GM10248 (cell line): ENCODE measurements at regions of chr12 and their contacts with region 1.

Region 1: DNA sequence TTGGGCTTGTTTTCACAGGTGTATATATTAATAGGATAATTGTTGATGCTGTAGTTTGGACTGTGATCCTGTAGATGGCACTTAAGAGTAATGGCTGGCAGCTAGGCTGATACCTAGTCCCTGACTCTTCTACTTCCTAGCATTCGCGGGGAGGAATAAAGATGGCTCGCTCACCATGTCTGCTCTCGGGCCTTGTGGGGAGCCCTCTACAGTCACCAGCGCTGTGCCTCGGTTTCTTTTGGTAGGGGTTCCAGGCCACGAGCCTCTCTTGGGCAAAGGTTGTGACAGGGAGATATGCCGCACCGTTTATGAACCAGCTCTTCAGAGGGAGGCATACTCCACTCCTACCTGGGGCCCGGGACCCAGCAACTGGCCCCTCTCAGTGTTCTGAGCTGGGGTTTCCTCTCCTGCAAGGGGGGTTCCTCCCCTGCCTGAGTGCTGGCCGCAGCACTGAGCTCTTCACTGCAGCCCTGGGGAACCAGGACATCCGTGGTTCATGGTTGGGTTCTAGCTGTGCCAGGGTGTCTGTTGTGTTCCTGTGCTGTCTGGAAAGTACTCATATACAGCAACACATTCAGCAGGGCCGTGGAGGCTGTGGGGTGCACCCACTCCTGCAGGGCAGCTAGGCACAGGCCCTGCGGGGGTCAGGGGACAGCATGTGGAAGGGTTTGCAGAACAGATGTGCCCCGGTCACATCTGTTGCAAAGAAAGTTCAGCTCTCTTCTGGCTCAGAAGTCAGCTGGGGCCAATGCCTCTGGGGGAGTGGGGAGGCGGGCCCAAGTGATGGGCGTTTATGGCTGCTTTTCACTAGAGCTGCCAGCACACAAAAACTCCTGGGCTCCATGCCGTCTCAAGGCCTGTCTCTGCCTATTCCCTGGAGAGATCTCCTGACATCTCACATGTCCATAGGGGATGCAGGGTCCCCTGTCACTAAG is 147.9 kb downstream of the PPFIA2 start:
- DNase-seq: no peak
- CTCF ChIP-seq: peak; percentile 17

Region 2: DNA sequence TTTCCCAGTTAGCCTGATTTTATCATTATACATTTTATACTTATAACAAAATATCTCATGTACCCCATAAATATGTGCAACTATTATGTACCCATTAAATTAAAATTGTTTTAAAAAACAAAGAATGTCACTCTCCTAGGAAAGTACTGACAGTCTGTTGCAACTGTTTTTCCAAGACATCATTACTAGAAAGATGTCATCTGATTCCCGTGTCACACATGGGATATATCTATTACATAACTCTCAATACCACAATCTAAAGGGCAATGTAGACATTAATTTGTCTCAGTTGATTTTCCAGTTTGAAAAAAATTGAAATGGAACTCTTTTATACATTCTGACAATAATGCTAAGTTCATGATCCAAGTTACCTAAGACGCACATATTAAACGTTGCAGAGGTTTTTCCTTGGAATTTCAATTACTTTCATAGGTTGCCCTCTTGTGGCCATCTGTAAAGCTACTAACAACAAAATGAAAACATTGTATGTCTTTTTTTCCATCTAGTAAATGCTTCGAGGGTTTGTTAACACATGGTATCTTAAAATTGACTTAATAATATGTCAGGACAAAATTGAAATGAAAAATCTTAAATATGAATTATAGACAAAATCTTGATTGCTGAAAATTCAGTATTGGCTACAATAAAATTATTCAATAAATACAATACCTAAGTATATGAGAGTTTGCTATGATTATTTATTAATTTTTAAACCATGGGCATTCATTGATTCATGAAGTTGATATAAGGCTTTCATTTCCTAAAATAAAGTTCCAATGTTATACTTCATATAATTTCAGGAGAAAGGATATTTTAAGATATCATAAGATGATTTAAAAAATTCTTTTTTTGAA is 16.3 kb after region 1 on chr12:
- CTCF ChIA-PET with region 1: interaction called, 10 read pairs
- POLR2A ChIA-PET with region 1: no interaction called
- DNase-seq: no peak
- CTCF ChIP-seq: peak; percentile 43

Region 3: GRCh38 chr12:81639196-81639595 is 28.0 kb after region 1 on chr12:
- CTCF ChIA-PET with region 1: no interaction called
- POLR2A ChIA-PET with region 1: no interaction called
- DNase-seq: no peak
- CTCF ChIP-seq: no peak

Region 4: DNA sequence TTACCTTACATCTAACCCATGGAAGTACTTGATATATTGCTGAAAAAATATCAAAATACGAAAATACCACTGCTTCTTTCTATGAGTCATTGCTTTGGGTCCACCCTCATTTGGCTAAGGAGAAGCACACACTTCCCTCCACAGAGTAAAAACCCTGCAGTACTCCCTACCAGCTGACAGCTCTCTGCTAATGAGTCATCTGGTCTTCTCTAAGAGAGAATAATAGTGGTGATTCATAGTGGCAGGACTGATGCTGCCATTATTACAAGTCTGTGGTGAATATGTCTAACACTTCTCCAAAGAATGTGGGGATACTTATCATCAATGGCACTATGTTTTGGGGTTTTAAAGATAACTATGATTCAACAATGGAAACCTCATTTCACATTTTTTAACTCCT is 57.3 kb after region 1 on chr12:
- CTCF ChIA-PET with region 1: no interaction called
- POLR2A ChIA-PET with region 1: no interaction called
- DNase-seq: no peak
- CTCF ChIP-seq: no peak

Region 5: DNA sequence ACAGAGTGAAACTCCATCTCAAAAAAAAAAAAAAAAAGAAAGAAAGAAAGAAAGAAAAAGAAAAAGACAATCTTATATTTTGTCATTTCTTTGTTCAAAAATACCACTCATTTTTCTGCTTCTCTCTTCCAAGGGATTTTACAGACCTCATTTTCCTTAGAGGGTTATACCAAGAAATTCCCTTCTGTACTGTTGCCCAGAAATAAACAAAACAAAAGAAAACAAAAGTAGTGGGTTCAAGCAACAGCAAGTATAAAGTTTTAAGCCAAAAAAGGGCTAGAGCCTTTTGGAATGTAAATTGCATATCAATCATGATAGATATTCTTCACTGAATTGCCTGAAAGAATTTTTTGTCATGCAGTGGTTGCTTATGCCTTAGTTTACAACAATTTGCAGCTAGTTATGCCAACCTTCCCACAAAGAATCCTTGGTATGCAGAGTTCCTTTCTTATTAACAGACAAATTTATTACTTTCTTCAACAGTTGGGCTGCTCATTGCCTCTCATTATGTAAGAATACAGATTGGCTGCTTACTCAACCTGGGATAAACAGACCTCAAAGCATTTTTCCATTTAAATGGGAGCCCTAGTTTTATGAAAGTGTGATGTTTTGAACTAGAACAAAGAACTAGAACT is 277.0 kb after region 1 on chr12:
- CTCF ChIA-PET with region 1: no interaction called
- POLR2A ChIA-PET with region 1: no interaction called
- DNase-seq: no peak
- CTCF ChIP-seq: no peak

Region 6: DNA sequence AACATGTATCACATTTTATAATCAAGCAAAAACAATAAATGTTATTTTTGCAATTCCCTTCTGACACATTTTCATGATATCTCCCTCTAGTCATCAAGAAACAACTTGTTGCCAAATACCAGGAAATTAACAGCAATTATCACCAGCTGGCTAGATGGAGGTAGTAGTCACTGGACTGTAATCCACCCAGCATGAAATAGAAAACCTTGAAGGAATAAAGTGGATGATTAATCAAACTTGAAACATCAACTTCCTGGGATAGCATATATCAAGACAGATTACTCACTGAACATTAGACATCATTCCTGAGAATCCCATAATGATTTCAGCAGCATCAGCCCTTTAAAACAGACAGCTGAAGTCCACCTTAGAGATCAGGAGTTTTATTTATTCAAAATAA is 488.0 kb after region 1 on chr12:
- CTCF ChIA-PET with region 1: no interaction called
- POLR2A ChIA-PET with region 1: no interaction called
- DNase-seq: no peak
- CTCF ChIP-seq: no peak